Activated CD8-positive, alpha-beta T cell treated with anti-CD3 and anti-CD28 coated beads for 36 hours (primary cell): ENCODE measurements at regions of chr6 and their contacts with region 1.

Region 1: GRCh38 chr6:129370268-129370916 is 339.6 kb downstream of the ARHGAP18 start:
- DNase-seq: peak; percentile 75
- ATAC-seq: no peak
- H3K4me3 Mint-ChIP-seq: no peak overlapping the region
- H3K27ac Mint-ChIP-seq: no peak overlapping the region
- H3K4me1 Mint-ChIP-seq: peaks cover 22% of the 10 kb centered on the region
- H3K27me3 Mint-ChIP-seq: no peaks in the 10 kb centered on the region
- CTCF ChIP-seq: peak; percentile 80

Region 2: DNA sequence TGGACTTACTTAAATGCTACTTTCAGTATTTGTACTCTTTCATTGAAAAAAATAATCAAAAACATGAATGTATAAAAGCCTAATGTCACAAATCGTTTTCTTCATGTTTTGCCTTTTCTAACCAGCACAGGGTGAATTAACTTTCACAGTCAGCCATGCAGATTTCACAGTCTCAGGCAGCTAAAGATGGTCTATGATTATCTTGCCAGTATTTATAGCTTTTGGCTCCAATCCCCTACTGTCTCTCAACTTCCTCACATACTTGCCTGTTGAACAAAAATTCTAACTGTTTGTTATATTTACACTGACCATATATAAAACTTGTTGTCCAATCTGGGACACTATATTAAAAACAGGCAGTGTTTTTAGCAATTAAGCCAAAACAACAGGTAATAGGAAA is 18.6 kb before region 1 on chr6:
- CTCF ChIA-PET with region 1: interaction called, 16 read pairs
- POLR2A ChIA-PET with region 1: interaction called, 3 read pairs
- intact Hi-C with region 1: no loop called
- DNase-seq: no peak
- ATAC-seq: no peak
- H3K4me3 Mint-ChIP-seq: no peak overlapping the region
- H3K27ac Mint-ChIP-seq: no peak overlapping the region
- H3K4me1 Mint-ChIP-seq: no peaks in the 10 kb centered on the region
- H3K27me3 Mint-ChIP-seq: peaks cover 10% of the 10 kb centered on the region
- CTCF ChIP-seq: no peak

Region 3: GRCh38 chr6:129381885-129382284 is 11.5 kb after region 1 on chr6:
- CTCF ChIA-PET with region 1: interaction called, 10 read pairs
- POLR2A ChIA-PET with region 1: no interaction called
- intact Hi-C with region 1: no loop called
- DNase-seq: no peak
- ATAC-seq: no peak
- H3K4me3 Mint-ChIP-seq: no peak overlapping the region
- H3K27ac Mint-ChIP-seq: no peak overlapping the region
- H3K4me1 Mint-ChIP-seq: no peaks in the 10 kb centered on the region
- H3K27me3 Mint-ChIP-seq: peaks cover 18% of the 10 kb centered on the region
- CTCF ChIP-seq: no peak

Region 4: DNA sequence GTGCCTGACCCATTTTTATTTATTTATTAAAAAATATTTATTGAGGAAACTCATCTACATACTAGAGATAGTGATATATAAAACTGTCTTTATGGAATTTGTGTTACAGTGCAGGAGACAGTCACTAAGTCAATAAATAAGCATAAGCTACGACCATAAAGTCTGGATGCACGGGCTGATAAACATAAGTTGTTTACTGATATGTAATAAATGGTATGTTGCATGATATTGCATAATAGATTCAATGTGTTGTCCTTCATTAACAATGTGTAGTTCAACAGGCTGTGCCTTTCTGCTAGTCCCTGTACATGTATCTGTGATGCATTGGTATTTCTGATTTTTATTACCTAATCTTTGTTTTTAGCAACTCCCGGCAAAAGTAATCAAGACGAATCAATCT is 28.4 kb after region 1 on chr6:
- CTCF ChIA-PET with region 1: interaction called, 15 read pairs
- POLR2A ChIA-PET with region 1: no interaction called
- intact Hi-C with region 1: no loop called
- DNase-seq: no peak
- ATAC-seq: no peak
- H3K4me3 Mint-ChIP-seq: no peak overlapping the region
- H3K27ac Mint-ChIP-seq: no peak overlapping the region
- H3K4me1 Mint-ChIP-seq: no peaks in the 10 kb centered on the region
- H3K27me3 Mint-ChIP-seq: peaks cover 11% of the 10 kb centered on the region
- CTCF ChIP-seq: no peak

Region 5: GRCh38 chr6:129429956-129430355 is 59.6 kb after region 1 on chr6:
- CTCF ChIA-PET with region 1: no interaction called
- POLR2A ChIA-PET with region 1: no interaction called
- intact Hi-C with region 1: no loop called
- DNase-seq: no peak
- ATAC-seq: no peak
- H3K4me3 Mint-ChIP-seq: no peak overlapping the region
- H3K27ac Mint-ChIP-seq: no peak overlapping the region
- H3K4me1 Mint-ChIP-seq: no peaks in the 10 kb centered on the region
- H3K27me3 Mint-ChIP-seq: peaks cover 4% of the 10 kb centered on the region
- CTCF ChIP-seq: no peak